ENCODE measurements at regions of chr1 and their contacts with region 1.

Region 1: DNA sequence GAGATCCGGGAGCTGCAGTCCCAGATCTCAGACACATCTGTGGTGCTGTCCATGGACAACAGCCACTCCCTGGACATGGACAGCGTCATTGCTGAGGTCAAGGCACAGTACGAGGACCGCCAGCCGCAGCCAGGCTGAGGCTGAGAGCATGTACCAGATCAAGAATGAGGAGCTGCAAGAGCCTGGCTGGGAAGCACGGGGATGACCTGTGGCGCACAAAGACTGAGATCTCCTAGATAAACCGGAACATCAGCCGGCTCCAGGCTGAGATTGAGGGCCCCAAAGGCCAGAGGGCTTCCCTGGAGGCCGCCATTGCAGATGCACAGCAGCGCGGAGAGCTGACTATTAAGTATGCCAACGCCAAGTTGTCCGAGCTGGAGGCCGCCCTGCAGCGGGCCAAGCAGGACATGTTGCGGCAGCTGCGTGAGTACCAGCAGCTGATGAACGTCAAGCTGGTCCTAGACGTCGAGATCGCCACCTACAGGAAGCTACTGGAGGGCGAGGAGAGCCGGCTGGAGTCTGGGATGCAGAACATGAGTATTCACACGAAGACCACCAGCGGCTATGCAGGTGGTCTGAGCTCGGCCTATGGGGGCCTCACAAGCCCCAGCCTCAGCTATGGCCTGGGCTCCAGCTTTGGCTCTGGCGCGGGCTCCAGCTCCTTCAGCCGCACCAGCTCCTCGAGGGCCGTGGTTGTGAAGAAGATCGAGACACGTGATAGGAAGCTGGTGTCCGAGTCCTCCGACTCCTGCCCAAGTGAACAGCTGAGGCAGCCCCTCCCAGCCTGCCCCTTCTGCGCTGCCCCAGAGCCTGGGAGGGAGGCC is 25.5 kb downstream of the ETV3L start:
- DNase-seq: peak; percentile 71
- H3K4me3 ChIP-seq: peak overlapping the region in 1 of 4 donors; percentile 29
- H3K27ac ChIP-seq: no peak overlapping the region
- H3K4me1 ChIP-seq: peaks cover 2 to 9% (median 5%) of the 10 kb centered on the region in 4 donors
- H3K27me3 ChIP-seq: peaks cover 14% of the 10 kb centered on the region
- CTCF ChIP-seq: peak; percentile 54 to 70 (median 68)
- EP300 ChIP-seq: no peak
- POLR2A ChIP-seq: no peak

Region 2: DNA sequence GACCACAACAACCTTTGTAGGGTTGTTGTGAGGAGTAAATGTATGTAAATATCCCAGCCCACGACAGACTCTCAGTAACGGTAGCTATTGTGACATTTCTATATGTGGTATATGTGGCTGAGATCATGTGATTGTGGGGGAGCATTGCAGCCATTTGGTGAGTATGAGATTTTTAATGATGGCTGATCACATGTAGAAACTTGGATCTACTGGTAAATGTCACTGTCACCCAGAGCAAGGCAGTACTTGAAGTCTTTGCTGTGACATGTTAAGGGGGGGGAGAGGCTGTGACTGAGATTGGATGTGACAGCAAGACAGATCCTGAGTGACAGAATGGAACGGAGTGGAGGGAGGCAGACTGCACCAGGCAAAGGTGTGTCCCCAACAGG is 549.7 kb before region 1 on chr1:
- in situ Hi-C with region 1: no loop called
- intact Hi-C with region 1: no loop called
- DNase-seq: no peak
- H3K4me3 ChIP-seq: no peak overlapping the region
- H3K27ac ChIP-seq: peak overlapping the region in 2 of 4 donors; percentile 8 to 47
- H3K4me1 ChIP-seq: peaks cover 0 to 17% (median 4%) of the 10 kb centered on the region in 4 donors
- H3K27me3 ChIP-seq: no peaks in the 10 kb centered on the region
- CTCF ChIP-seq: no peak
- EP300 ChIP-seq: no peak
- POLR2A ChIP-seq: no peak

Region 3: DNA sequence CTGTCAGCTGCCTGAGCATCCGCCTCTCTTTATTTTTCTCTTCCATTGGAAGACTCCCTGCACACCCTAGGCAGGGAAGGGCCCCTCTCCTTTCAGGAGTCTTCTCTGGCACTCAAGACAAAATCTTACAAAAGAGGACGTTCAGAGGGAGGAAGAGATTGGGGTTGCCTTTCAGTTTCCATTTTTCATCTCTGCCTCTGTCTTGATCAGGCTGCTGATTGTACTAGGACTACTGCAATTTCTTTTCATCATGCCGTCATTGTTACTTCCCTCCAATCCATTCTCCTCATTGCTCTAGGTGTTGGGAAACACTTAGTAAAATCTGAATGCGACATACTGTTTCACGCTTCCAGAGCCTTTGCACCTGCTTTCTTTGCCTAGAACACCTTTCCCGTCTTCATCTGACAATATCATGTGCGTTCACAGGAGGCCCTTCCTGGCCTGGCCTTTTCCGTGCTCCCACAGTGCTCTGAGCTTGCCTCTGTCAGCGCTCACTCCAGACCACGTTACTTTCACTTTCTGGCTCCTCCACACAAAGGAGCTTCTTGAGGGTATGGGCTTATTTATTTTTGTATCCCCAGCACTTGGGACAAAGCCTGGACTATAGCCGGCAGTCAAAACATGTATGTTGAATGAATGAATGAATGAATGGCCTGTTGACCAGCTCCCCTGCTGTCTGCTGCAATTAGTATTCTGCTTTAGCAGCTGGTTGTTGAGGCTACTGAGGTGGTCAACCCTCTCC is 142.8 kb before region 1 on chr1:
- in situ Hi-C with region 1: loop called in 1 of 4 experiments (anchors 10 kb)
- intact Hi-C with region 1: no loop called
- DNase-seq: no peak
- H3K4me3 ChIP-seq: no peak overlapping the region
- H3K27ac ChIP-seq: no peak overlapping the region
- H3K4me1 ChIP-seq: peaks cover 0 to 20% (median 7%) of the 10 kb centered on the region in 4 donors
- H3K27me3 ChIP-seq: peaks cover 44% of the 10 kb centered on the region
- CTCF ChIP-seq: no peak
- EP300 ChIP-seq: no peak
- POLR2A ChIP-seq: no peak

Region 4: DNA sequence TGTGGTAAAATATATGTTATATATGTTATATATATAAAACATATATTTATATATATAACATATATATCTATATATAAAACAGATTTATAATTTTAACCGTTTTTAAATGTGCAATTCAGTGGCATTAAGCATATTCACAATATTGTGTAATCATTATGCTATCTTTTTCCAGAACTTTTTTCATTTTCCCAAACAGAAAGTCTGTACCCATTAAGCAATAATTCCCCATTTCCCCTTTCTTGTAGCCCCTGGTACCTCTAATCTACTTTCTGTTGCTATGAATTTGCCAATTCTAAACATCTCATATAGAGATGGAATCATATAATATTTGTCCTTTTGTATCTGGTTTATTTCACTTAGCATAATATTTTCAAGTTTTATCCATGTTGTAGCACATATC is 17.9 kb before region 1 on chr1:
- in situ Hi-C with region 1: no loop called
- intact Hi-C with region 1: no loop called
- DNase-seq: no peak
- H3K4me3 ChIP-seq: no peak overlapping the region
- H3K27ac ChIP-seq: no peak overlapping the region
- H3K4me1 ChIP-seq: no peaks in the 10 kb centered on the region
- H3K27me3 ChIP-seq: peaks cover 3% of the 10 kb centered on the region
- CTCF ChIP-seq: no peak
- EP300 ChIP-seq: no peak
- POLR2A ChIP-seq: no peak